Mucosa of descending colon (tissue), 3 donors: ENCODE measurements at regions of chr1 and their contacts with region 1.

Region 1: GRCh38 chr1:222654849-222655248 is 37.0 kb downstream of the MIA3 start:
- DNase-seq: peak in 2 of 3 donors; percentile 47 to 65
- ATAC-seq: peak; percentile 86
- H3K4me3 ChIP-seq: no peak overlapping the region
- H3K4me1 ChIP-seq: peaks cover 13% of the 10 kb centered on the region
- CTCF ChIP-seq: no peak

Region 2: GRCh38 chr1:222171005-222171404 is 483.8 kb before region 1 on chr1:
- intact Hi-C with region 1: no loop called
- DNase-seq: peak in 1 of 3 donors; percentile 3
- ATAC-seq: peak; percentile 58
- H3K4me3 ChIP-seq: no peak overlapping the region
- H3K4me1 ChIP-seq: no peaks in the 10 kb centered on the region
- CTCF ChIP-seq: no peak

Region 3: DNA sequence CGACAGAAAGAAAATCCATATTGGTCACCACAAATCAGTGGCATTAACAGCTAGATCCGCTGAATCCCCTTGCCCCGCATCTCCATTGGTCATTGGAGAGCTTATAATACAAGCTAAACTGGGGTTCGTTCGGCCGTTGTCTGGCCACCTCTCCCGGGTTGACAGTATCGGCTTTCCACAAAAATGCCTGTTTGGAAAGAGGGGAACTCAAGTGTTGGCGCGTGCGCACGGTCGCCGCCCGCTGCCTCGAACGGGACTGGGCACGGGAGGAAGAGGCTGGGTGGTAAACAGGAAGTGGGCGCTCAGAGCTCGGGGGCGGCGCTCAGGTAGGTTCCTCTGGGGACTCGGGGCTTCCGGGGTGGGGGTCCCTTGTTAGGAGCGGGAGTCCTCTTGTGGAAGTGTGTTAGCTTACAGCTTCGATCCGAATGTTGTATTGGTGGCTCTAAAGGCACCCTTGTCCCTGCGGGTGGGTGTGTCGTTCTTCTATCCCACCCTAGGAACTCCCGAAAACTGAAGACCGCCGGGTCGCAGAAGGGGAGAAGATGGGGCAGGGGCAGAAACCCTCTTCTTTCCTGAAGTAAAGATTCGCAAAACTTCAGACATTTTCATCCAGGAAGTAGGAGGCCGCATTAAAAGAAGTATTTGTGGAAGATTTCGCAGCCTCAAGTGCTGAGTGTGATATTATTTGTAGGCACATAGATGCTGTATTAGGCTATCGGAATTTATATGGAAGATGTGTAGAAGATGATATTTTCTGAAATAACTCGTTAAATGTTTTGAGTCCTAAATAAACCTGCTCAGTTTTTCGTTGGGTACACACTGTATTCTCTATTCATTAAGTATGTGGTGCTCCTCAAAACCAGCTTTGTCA is 58.5 kb after region 1 on chr1:
- intact Hi-C with region 1: loop called in 1 of 2 experiments (anchors 10 kb)
- DNase-seq: peak; percentile 94 to 98 (median 95)
- ATAC-seq: peak; percentile 85
- H3K4me3 ChIP-seq: peak overlapping the region; percentile 83
- H3K4me1 ChIP-seq: peaks cover 12% of the 10 kb centered on the region
- CTCF ChIP-seq: no peak